MCF 10A (cell line): ENCODE measurements at regions of chr19 and their contacts with region 1.

Region 1: DNA sequence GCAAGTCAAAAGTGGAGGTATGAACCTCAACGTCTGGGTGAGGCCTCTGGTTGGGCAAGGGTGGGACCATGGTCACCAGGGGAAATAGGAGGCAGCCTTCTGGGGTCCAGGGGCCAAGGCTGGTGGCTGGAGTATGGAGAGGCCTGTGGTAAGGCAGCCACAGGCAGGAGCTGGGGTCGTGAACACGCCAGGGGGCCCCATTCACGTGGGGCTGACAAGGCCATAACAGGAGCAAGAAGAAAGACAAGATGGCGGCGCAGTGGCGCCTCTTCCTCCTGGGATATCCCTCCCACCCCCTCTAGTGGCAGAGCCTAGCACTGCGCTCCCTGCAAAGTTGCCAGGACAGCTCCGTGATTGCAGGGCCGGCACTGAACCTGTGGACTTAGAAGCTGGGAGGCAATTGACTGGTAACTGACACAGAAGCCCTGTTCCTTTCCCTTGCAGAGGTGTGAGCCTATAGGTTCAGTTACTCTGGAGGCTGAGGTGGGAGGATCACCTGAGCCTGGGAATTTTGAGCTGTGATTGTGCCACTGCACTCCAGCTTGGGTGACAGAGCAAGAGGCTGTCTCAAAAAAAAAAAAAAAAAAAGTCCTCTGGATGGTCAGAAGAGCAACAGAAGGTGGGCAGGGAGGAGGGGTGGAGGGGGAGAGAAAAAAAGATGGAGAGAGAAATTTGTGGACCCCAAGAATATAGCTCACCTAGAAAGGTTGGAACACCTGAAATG is 19.7 kb upstream of the EDDM13 start:
- DNase-seq: peak; percentile 54
- H3K4me3 Mint-ChIP-seq: no peak overlapping the region
- H3K27ac Mint-ChIP-seq: no peak overlapping the region
- H3K4me1 Mint-ChIP-seq: no peaks in the 10 kb centered on the region
- H3K27me3 Mint-ChIP-seq: no peaks in the 10 kb centered on the region
- CTCF ChIP-seq: peak; percentile 72

Region 2: DNA sequence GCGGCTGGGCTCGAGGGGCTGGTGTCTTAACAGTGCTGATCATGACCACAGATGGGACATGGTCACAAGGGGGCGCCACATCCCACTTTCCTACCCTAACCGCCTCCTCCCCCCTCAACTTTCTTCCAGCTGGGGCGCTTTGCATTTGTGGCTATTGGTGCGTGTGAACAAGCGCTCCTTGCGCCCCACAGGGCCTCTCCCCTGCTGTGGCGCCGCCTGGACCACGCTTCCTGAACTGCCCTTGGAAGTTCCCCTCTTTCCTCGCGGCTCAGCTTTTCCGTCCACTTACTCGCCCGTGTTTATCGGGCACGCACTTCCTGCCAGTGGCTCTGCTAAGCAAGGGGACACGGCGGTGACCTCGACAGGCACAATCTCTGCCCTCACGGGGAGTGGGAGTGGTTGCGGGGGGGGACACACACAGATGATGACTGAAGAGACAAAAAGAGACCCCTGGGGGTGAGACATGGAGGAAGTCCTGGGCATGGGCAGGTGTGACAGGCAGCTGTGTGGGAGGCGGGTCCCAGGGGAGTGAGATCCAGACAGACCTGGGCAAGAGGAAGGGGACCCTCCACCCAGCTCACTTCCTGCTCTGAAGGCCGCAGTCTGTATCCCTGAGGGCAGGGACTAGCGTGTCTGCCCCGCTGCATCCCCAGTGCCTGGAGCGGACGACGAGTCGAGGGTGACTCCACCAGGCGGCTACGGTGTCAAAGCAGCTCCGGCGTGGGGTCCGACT is 172.0 kb before region 1 on chr19:
- CTCF ChIA-PET with region 1: interaction called, 68 read pairs
- POLR2A ChIA-PET with region 1: interaction called, 4 read pairs
- intact Hi-C with region 1: loop called (anchors 2 kb)
- DNase-seq: peak; percentile 73
- H3K4me3 Mint-ChIP-seq: peak overlapping the region; percentile 55
- H3K27ac Mint-ChIP-seq: peak overlapping the region; percentile 67
- H3K4me1 Mint-ChIP-seq: peaks cover 9% of the 10 kb centered on the region
- H3K27me3 Mint-ChIP-seq: no peaks in the 10 kb centered on the region
- CTCF ChIP-seq: peak; percentile 41

Region 3: GRCh38 chr19:56273563-56274117 is 20.8 kb after region 1 on chr19:
- CTCF ChIA-PET with region 1: interaction called, 36 read pairs
- POLR2A ChIA-PET with region 1: interaction called, 3 read pairs
- intact Hi-C with region 1: no loop called
- DNase-seq: peak; percentile 5
- H3K4me3 Mint-ChIP-seq: no peak overlapping the region
- H3K27ac Mint-ChIP-seq: no peak overlapping the region
- H3K4me1 Mint-ChIP-seq: peaks cover 8% of the 10 kb centered on the region
- H3K27me3 Mint-ChIP-seq: no peaks in the 10 kb centered on the region
- CTCF ChIP-seq: no peak

Region 4: DNA sequence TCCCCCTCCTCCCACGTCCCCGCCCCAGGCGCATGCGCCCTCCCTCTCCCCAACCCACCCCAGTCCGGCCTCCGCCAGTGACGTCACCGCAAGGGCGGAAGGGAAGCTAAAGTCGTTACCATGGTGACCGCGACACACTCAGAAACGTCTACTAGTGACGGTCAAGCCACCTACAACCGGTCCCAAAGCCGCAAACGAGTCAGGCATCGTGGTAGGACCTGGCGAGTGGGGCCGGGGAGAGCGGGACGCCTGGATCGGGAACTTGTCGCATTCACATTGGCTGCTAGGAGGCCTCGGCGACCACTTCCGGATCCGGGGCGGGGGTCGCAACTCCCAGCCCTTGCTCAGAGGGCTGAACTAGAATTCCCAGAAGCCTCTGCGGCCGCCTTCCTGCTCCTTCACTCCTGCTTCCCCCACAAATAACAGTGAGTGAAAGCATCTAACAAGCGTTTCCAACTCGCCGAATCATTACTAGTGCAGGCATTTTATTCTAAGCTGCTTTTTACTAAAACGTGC is 61.8 kb after region 1 on chr19 and contains the start of gene ZSCAN5A:
- CTCF ChIA-PET with region 1: interaction called, 60 read pairs
- POLR2A ChIA-PET with region 1: interaction called, 3 read pairs
- intact Hi-C with region 1: no loop called
- DNase-seq: peak; percentile 97
- H3K4me3 Mint-ChIP-seq: peak within 1 kb of the TSS; percentile 81
- H3K27ac Mint-ChIP-seq: peak within 1 kb of the TSS; percentile 100
- H3K4me1 Mint-ChIP-seq: peaks cover 18% of the 10 kb centered on the region
- H3K27me3 Mint-ChIP-seq: no peaks in the 10 kb centered on the region
- CTCF ChIP-seq: no peak
- total RNA-seq, gene ZSCAN5A: 6.2 and 8.1 TPM in 2 replicates

Region 5: DNA sequence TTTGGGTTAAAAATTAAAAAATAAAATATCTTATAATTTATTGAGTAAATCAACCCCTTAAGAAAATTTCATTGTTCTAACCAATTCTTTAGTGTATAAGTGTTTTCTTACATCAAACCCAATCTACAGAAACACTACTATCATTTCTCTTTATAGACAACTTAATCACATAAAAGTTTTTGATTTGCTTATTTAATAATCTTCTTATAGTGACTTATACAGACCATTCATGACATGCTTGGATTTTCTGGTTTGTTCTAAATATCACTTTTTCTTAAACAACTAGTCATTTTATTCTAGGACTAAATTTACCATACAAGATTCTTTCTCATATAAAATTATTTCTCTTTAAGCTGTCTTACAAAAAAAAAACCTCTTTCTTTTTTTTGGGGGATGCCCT is 89.1 kb after region 1 on chr19:
- CTCF ChIA-PET with region 1: interaction called, 168 read pairs
- POLR2A ChIA-PET with region 1: no interaction called
- intact Hi-C with region 1: no loop called
- DNase-seq: no peak
- H3K4me3 Mint-ChIP-seq: no peak overlapping the region
- H3K27ac Mint-ChIP-seq: no peak overlapping the region
- H3K4me1 Mint-ChIP-seq: no peaks in the 10 kb centered on the region
- H3K27me3 Mint-ChIP-seq: no peaks in the 10 kb centered on the region
- CTCF ChIP-seq: no peak